ENCODE measurements at regions of chr1 and their contacts with region 1.

Region 1: GRCh38 chr1:18635891-18636595 is 5.4 kb downstream of the PAX7 start:
- DNase-seq: peak; percentile 46
- H3K4me3 ChIP-seq: no peak overlapping the region
- H3K27ac ChIP-seq: no peak overlapping the region
- H3K4me1 ChIP-seq: no peaks in the 10 kb centered on the region
- H3K27me3 ChIP-seq: peaks cover 90% of the 10 kb centered on the region
- CTCF ChIP-seq: peak in 1 of 2 donors; percentile 3

Region 2: GRCh38 chr1:18535391-18536210 is 100.4 kb before region 1 on chr1:
- CTCF ChIA-PET with region 1: no interaction called
- dilution Hi-C with region 1: loop called (anchors 5 kb)
- in situ Hi-C with region 1: no loop called
- intact Hi-C with region 1: no loop called
- DNase-seq: no peak
- H3K4me3 ChIP-seq: no peak overlapping the region
- H3K27ac ChIP-seq: no peak overlapping the region
- H3K4me1 ChIP-seq: no peaks in the 10 kb centered on the region
- H3K27me3 ChIP-seq: no peaks in the 10 kb centered on the region
- CTCF ChIP-seq: no peak

Region 3: DNA sequence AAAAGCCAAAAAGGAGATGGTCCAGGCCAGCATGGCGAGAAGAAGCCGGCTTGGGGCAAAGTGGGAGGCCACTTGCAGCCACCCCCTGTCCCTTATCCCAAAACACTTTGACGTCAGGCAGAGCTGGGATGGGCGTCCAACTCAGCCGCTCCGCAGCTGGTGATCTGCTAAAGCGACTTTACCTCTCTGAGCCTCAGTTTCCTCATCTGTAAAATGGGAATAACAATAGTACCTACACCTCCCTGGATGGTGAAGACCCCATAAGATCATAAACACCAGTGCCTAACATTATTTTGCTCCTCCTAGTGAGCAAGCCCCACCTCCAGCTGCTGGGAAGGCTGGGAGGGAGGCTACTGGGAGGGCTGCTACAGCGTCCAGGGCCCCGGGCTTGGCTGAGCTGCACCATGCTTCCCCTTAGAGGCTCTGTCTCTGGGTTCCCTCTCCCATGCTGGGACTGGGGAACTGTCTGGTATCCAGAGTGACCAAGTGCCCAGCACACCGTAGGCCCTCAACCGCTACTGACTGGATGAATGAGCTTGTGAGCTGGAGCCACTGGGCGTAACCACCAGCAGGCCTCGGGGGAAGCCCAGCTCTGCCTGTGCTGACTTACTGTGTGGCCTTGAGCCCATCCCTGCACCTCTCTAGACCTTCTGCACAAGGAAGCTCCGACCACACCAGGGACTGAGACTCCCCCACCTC is 302.1 kb after region 1 on chr1:
- CTCF ChIA-PET with region 1: no interaction called
- dilution Hi-C with region 1: no loop called
- in situ Hi-C with region 1: no loop called
- intact Hi-C with region 1: no loop called
- DNase-seq: peak; percentile 55
- H3K4me3 ChIP-seq: no peak overlapping the region
- H3K27ac ChIP-seq: peak overlapping the region; percentile 96
- H3K4me1 ChIP-seq: peaks cover 69% of the 10 kb centered on the region
- H3K27me3 ChIP-seq: no peaks in the 10 kb centered on the region
- CTCF ChIP-seq: no peak